ENCODE measurements at regions of chr21 and their contacts with region 1.

Region 1: DNA sequence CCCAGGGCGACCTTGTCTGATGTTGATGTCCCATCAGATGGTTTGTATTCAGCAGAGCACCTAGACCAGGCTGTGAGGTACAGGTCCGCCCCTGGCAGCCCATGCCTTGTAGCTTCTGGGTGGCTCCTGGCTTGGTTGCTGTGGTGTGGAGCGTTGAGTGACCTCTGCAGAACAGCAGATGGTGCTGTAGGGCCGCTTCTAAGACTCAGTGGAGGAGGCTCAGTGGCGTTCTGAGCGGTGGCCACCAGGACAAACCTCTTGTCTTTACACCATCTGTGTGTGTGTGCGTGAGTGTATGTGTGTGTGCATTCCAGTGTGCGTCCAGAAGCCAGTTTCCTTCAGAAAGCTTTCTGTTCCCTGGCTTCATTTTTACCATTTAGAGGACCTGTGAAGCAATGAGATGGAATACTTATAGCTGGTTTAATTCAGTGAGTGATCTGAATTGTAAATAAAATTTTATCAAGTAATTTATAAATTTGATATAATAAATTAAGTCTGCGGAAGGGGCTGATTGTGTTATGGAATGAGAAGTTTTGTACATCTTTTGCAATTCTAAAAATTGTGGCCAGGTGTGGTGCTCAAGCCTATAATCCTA is 66.1 kb downstream of the ADARB1 start:
- DNase-seq: no peak
- ATAC-seq: peak; percentile 98
- H3K4me3 ChIP-seq: no peak overlapping the region
- H3K27ac ChIP-seq: no peak overlapping the region
- H3K4me1 ChIP-seq: no peaks in the 10 kb centered on the region
- H3K27me3 ChIP-seq: peaks cover 0 to 9% of the 10 kb centered on the region in 2 experiments; a peak in 1 of 4 replicates
- CTCF ChIP-seq: peak; percentile 86 to 98 (median 90); a peak in 5 of 6 replicates
- EP300 ChIP-seq: no peak
- POLR2A ChIP-seq: no peak
- RAD21 ChIP-seq: peak; percentile 90

Region 2: GRCh38 chr21:44801468-44802395 is 338.7 kb before region 1 on chr21 and contains the start of gene UBE2G2:
- CTCF ChIA-PET with region 1: interaction called, 12 read pairs
- POLR2A ChIA-PET with region 1: no interaction called
- RAD21 ChIA-PET with region 1: interaction called, 3 read pairs
- SMC1A ChIA-PET with region 1: no interaction called
- in situ Hi-C with region 1: no loop called
- intact Hi-C with region 1: loop called (anchors 10 kb)
- DNase-seq: no peak
- ATAC-seq: peak; percentile 96
- H3K4me3 ChIP-seq: peak within 1 kb of the TSS; percentile 72
- H3K27ac ChIP-seq: peak within 1 kb of the TSS; percentile 71
- H3K4me1 ChIP-seq: peaks cover 12% of the 10 kb centered on the region
- H3K27me3 ChIP-seq: no peaks in the 10 kb centered on the region
- CTCF ChIP-seq: no peak
- EP300 ChIP-seq: no peak
- POLR2A ChIP-seq: peak; percentile 92
- RAD21 ChIP-seq: no peak
- polyA plus RNA-seq, gene UBE2G2: 27.0 to 32.0 TPM

Region 3: DNA sequence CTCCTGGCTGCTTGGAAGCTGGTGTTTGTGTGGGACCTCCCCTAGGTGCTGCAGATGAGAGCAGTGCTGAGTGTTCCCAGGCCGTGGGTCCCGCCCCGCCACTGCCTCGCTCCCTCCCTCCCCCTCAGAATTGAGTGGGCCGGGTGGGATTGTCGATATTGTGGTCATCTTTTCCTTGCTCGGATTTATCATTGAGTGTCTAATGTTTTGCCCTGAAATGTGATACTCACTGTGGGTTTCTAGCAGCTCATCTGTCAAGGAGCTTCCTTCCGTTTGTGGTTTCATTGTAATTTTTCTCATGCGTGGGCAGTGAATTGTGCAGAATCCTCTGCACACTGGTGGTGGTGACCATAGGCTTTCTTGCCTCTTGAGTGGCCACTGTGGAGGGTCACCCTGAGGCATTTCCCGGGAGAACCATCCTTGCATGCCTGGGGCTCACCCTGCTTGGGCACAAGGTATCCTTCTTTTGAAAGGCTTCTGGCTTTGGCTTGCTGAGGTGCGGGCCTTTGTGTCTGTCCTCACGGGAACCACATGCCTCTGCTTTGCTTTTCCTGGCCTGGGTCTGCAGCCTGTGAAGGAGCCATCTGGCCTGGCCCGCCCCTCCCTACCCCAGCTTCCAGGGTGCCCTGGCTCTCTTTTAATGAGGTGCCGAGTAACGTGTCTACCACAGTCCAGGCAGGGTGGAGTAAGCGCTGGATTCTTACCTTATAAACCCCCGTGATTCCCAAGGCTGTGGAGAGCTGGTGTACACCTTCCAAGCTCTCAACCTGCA is 175.0 kb before region 1 on chr21:
- CTCF ChIA-PET with region 1: interaction called, 37 read pairs
- POLR2A ChIA-PET with region 1: no interaction called
- RAD21 ChIA-PET with region 1: interaction called, 4 read pairs
- SMC1A ChIA-PET with region 1: interaction called, 16 read pairs
- in situ Hi-C with region 1: no loop called
- intact Hi-C with region 1: no loop called
- DNase-seq: no peak
- ATAC-seq: peak; percentile 56
- H3K4me3 ChIP-seq: no peak overlapping the region
- H3K27ac ChIP-seq: no peak overlapping the region
- H3K4me1 ChIP-seq: peaks cover 6% of the 10 kb centered on the region
- H3K27me3 ChIP-seq: no peaks in the 10 kb centered on the region
- CTCF ChIP-seq: no peak
- EP300 ChIP-seq: no peak
- POLR2A ChIP-seq: no peak
- RAD21 ChIP-seq: no peak

Region 4: GRCh38 chr21:45098867-45099266 is 41.6 kb before region 1 on chr21:
- CTCF ChIA-PET with region 1: interaction called, 173 read pairs
- POLR2A ChIA-PET with region 1: no interaction called
- RAD21 ChIA-PET with region 1: interaction called, 40 read pairs
- SMC1A ChIA-PET with region 1: interaction called, 31 read pairs
- in situ Hi-C with region 1: no loop called
- intact Hi-C with region 1: loop called (anchors 2 kb)
- DNase-seq: no peak
- ATAC-seq: peak; percentile 77
- H3K4me3 ChIP-seq: no peak overlapping the region
- H3K27ac ChIP-seq: no peak overlapping the region
- H3K4me1 ChIP-seq: peaks cover under 1% of the 10 kb centered on the region
- H3K27me3 ChIP-seq: no peaks in the 10 kb centered on the region; a peak in 1 of 4 replicates
- CTCF ChIP-seq: peak; percentile 59 to 63 (median 62)
- EP300 ChIP-seq: no peak
- POLR2A ChIP-seq: no peak
- RAD21 ChIP-seq: peak; percentile 61

Region 5: DNA sequence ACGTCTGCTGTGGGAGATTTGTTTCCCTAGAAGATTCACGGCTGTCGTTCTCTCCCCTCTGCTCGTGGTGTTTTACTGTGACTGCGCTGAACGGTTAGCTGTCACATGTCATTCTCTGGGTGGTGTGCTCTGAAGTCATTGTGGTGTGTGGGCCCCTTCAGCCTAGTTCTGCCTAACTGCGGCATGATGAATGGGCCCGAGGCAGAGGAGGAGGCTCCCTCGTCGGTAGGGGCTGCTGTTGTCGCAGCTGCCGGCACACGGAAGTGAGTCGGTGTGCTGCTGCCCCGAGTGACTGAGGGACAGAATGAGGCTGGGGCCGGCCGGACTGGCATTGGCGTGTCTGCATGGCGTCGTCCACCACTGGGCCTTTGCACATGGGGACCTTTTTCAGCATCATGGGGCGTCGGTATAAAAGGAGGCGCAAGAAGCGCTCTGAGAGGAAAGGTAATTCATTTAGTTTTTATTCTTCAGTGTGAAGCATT is 11.9 kb after region 1 on chr21:
- CTCF ChIA-PET with region 1: interaction called, 115 read pairs
- POLR2A ChIA-PET with region 1: interaction called, 5 read pairs
- RAD21 ChIA-PET with region 1: interaction called, 18 read pairs
- SMC1A ChIA-PET with region 1: interaction called, 19 read pairs
- in situ Hi-C with region 1: no loop called
- intact Hi-C with region 1: no loop called
- DNase-seq: no peak
- ATAC-seq: peak; percentile 97
- H3K4me3 ChIP-seq: no peak overlapping the region
- H3K27ac ChIP-seq: no peak overlapping the region
- H3K4me1 ChIP-seq: 0 out of 2 replicates have a peak, but pooled peaks cover 4% of the 10 kb centered on the region
- H3K27me3 ChIP-seq: 0 out of 4 replicates have a peak, but pooled peaks cover 0 to 2% of the 10 kb centered on the region in 2 experiments
- CTCF ChIP-seq: peak; percentile 68 to 95 (median 88); a peak in 5 of 6 replicates
- EP300 ChIP-seq: peak in 1 of 2 experiments; percentile 43; a peak in 2 of 4 replicates
- POLR2A ChIP-seq: peak; percentile 28; the same call in 1 of the 2 replicates
- RAD21 ChIP-seq: peak; percentile 59

Region 6: DNA sequence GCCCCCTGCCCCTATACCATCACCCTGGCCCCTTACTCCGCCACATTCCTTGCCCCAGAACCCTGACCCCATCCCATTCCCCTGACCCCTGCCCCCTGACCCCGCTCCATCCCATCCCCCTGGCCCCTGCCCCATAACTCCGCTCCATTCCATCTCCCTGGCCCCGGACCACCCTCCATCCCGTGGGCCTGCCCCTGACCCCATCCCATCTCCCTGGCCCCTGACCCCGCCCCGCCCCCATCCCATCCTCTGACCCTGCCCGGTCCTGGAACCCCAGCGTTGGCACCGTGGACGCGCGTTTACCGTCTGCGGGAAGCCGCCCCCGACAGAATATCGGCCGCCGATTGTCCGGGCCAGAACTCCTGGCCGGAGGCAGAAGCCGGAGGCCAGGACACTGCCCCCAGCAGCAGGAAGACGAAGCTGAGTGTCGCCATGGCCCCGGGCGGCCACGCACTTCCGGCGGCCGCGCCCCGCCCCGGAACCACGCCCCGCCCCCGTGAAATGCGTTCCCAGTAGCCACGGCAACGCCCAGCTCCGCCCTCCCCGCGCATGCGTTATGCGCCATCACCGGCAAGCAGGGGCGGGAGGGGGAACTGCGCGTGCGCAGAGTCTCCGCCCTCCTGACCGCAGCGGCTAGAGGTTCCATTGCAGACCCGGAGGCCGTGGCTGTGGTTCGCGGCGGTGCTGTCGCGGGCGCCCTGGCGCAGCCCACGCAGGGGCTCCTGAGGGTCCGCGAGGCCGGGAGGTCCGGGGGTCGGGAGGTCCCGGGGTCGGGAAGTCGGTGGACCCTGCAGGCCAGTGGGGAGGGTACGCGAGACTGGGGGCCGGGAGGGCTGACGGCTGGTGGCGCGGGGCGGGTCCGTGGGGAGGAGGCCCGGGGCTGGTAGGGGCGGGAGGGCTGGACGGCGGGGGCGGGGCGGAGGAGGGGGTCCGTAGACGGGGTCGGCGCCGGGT is 147.3 kb after region 1 on chr21 and contains the start of gene POFUT2:
- CTCF ChIA-PET with region 1: interaction called, 87 read pairs
- POLR2A ChIA-PET with region 1: no interaction called
- RAD21 ChIA-PET with region 1: interaction called, 9 read pairs
- SMC1A ChIA-PET with region 1: interaction called, 23 read pairs
- in situ Hi-C with region 1: no loop called
- intact Hi-C with region 1: loop called (anchors 5 kb)
- DNase-seq: peak; percentile 82
- ATAC-seq: peak; percentile 91
- H3K4me3 ChIP-seq: peak within 1 kb of the TSS; percentile 98
- H3K27ac ChIP-seq: no peak within 1 kb of the TSS
- H3K4me1 ChIP-seq: 0 out of 2 replicates have a peak, but pooled peaks cover 4% of the 10 kb centered on the region
- H3K27me3 ChIP-seq: no peaks in the 10 kb centered on the region
- CTCF ChIP-seq: no peak
- EP300 ChIP-seq: no peak
- POLR2A ChIP-seq: peak; percentile 90
- RAD21 ChIP-seq: no peak
- polyA plus RNA-seq, gene POFUT2: 1.2 to 1.6 TPM

Region 7: GRCh38 chr21:46402421-46402820 is 1262.0 kb after region 1 on chr21:
- CTCF ChIA-PET with region 1: no interaction called
- POLR2A ChIA-PET with region 1: no interaction called
- RAD21 ChIA-PET with region 1: no interaction called
- SMC1A ChIA-PET with region 1: no interaction called
- in situ Hi-C with region 1: no loop called
- intact Hi-C with region 1: no loop called
- DNase-seq: no peak
- ATAC-seq: no peak
- H3K4me3 ChIP-seq: no peak overlapping the region
- H3K27ac ChIP-seq: no peak overlapping the region
- H3K4me1 ChIP-seq: no peaks in the 10 kb centered on the region
- H3K27me3 ChIP-seq: no peaks in the 10 kb centered on the region
- CTCF ChIP-seq: 0 out of 6 replicates have a peak, but pooled peaks of 1 of the 3 experiments have one; percentile 1
- EP300 ChIP-seq: no peak
- POLR2A ChIP-seq: no peak
- RAD21 ChIP-seq: no peak

Measured in GM12878 (cell line).